IMR-90 (cell line): ENCODE measurements at regions of chr5 and their contacts with region 1.

Region 1: GRCh38 chr5:82413302-82414040 is 135.3 kb upstream of the RPS23 start:
- DNase-seq: peak; percentile 83
- ATAC-seq: peak; percentile 86
- H3K4me3 ChIP-seq: no peak overlapping the region
- H3K27ac ChIP-seq: peak overlapping the region; percentile 100
- H3K4me1 ChIP-seq: peaks cover 13% of the 10 kb centered on the region
- H3K27me3 ChIP-seq: no peaks in the 10 kb centered on the region
- CTCF ChIP-seq: no peak
- POLR2A ChIP-seq: no peak
- RAD21 ChIP-seq: no peak

Region 2: DNA sequence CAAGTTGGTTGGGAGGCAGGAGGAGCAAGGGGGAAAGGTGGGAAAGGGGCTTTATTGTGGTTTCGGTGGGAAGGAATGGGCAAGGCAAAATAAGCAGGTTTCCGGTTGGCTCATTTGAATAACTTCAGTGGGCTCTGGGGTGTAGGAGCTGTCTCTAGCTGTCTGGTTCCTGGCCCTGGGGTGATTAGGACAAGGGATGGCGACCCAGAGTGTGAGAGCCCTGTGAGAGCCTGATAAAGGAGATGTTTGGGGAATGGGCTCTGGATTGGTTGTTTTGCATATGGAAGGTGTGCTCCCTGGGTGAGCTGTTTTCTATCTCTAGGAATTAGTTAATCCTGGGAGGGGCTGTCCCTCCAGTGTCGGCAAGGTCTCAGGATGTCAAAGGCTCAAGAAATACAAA is 1858.8 kb before region 1 on chr5:
- CTCF ChIA-PET with region 1: no interaction called
- POLR2A ChIA-PET with region 1: interaction called, 12 read pairs
- dilution Hi-C with region 1: no loop called
- in situ Hi-C with region 1: no loop called
- intact Hi-C with region 1: no loop called
- DNase-seq: no peak
- ATAC-seq: no peak
- H3K4me3 ChIP-seq: no peak overlapping the region
- H3K27ac ChIP-seq: no peak overlapping the region
- H3K4me1 ChIP-seq: no peaks in the 10 kb centered on the region
- H3K27me3 ChIP-seq: peaks cover 21% of the 10 kb centered on the region
- CTCF ChIP-seq: no peak
- POLR2A ChIP-seq: no peak
- RAD21 ChIP-seq: no peak

Region 3: DNA sequence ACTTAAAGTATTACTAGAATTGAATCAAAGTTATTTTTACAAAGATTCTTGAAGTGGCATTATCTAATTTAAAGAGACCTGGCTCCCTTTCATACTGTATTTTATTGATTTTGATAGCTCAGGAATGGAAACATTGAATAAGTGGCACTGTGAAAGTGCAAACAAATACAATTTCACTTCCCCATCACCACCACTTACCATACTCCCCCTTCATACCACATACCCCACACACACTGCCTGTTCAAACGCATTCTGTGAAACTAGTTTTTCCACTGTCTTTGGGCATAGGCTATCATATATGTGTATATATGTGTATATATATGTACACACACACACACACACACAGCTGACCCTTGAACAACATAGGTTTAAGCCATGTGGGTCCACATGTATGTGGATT is 503.8 kb before region 1 on chr5:
- CTCF ChIA-PET with region 1: no interaction called
- POLR2A ChIA-PET with region 1: no interaction called
- dilution Hi-C with region 1: no loop called
- in situ Hi-C with region 1: no loop called
- intact Hi-C with region 1: no loop called
- DNase-seq: no peak
- ATAC-seq: no peak
- H3K4me3 ChIP-seq: no peak overlapping the region
- H3K27ac ChIP-seq: no peak overlapping the region
- H3K4me1 ChIP-seq: peaks cover 1% of the 10 kb centered on the region; the same call in 1 of the 2 replicates
- H3K27me3 ChIP-seq: no peaks in the 10 kb centered on the region; the same call in 1 of the 2 replicates
- CTCF ChIP-seq: no peak
- POLR2A ChIP-seq: no peak
- RAD21 ChIP-seq: no peak

Region 4: DNA sequence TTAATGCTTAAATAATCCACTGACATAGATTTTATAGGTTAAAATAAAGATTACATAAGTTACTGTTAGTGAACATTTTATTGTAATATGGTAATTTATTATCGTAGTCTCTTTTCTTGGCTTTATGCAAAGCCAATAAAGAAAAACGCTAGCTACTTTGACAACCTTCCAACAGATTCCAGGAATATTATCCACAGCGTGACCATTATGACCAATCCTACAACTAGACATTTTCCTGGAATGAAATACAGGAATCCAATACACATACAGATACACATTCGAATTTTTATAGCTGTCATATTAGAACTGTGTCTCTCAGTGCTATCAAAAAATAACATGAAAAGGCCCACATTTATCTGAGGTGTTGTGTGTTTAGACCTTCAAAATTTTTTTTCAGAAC is 148.4 kb before region 1 on chr5:
- CTCF ChIA-PET with region 1: no interaction called
- POLR2A ChIA-PET with region 1: no interaction called
- dilution Hi-C with region 1: no loop called
- in situ Hi-C with region 1: no loop called
- intact Hi-C with region 1: no loop called
- DNase-seq: peak; percentile 54
- ATAC-seq: peak; percentile 74
- H3K4me3 ChIP-seq: no peak overlapping the region
- H3K27ac ChIP-seq: no peak overlapping the region
- H3K4me1 ChIP-seq: no peaks in the 10 kb centered on the region
- H3K27me3 ChIP-seq: no peaks in the 10 kb centered on the region
- CTCF ChIP-seq: no peak
- POLR2A ChIP-seq: no peak
- RAD21 ChIP-seq: no peak

Region 5: GRCh38 chr5:82364497-82364896 is 49.0 kb before region 1 on chr5:
- CTCF ChIA-PET with region 1: no interaction called
- POLR2A ChIA-PET with region 1: no interaction called
- dilution Hi-C with region 1: no loop called
- in situ Hi-C with region 1: no loop called
- intact Hi-C with region 1: no loop called
- DNase-seq: peak; percentile 71
- ATAC-seq: peak; percentile 83
- H3K4me3 ChIP-seq: no peak overlapping the region
- H3K27ac ChIP-seq: no peak overlapping the region
- H3K4me1 ChIP-seq: no peaks in the 10 kb centered on the region
- H3K27me3 ChIP-seq: no peaks in the 10 kb centered on the region
- CTCF ChIP-seq: peak; percentile 70
- POLR2A ChIP-seq: no peak; the same call in 1 of the 2 replicates
- RAD21 ChIP-seq: peak; percentile 77